Activated naive CD4-positive, alpha-beta T cell treated with anti-CD3 and anti-CD28 coated beads, Interleukin-2, amount 10 ng/mL, durations not matched to agents 7 days and 5 days (primary cell): ENCODE measurements at regions of chr4 and their contacts with region 1.

Region 1: GRCh38 chr4:80060804-80061203 is 12.2 kb downstream of the ANTXR2 start:
- DNase-seq: no peak
- H3K4me3 Mint-ChIP-seq: no peak overlapping the region
- H3K27ac Mint-ChIP-seq: no peak overlapping the region
- H3K4me1 Mint-ChIP-seq: peaks cover 33% of the 10 kb centered on the region
- H3K27me3 Mint-ChIP-seq: no peaks in the 10 kb centered on the region

Region 2: DNA sequence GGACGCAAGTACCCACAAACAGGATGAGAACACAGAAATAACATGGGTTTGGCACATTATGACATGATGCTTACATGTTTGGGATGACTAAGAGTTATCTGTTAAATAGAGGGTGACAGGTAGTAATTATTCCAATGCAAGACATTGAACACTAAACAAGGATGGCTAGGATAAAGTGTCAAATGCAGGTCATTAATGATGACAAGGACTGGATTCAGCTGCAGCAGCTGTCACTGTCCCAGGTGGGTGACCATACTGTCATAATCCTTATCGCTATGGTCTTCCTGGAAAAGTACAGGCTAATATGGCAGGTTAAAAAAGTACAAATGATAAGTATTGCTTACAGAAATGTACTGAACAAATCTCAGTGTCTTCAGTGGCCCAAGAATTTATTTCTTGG is 111.6 kb before region 1 on chr4:
- CTCF ChIA-PET with region 1: no interaction called
- DNase-seq: no peak
- H3K4me3 Mint-ChIP-seq: no peak overlapping the region
- H3K27ac Mint-ChIP-seq: no peak overlapping the region
- H3K4me1 Mint-ChIP-seq: peaks cover 5% of the 10 kb centered on the region
- H3K27me3 Mint-ChIP-seq: no peaks in the 10 kb centered on the region

Region 3: DNA sequence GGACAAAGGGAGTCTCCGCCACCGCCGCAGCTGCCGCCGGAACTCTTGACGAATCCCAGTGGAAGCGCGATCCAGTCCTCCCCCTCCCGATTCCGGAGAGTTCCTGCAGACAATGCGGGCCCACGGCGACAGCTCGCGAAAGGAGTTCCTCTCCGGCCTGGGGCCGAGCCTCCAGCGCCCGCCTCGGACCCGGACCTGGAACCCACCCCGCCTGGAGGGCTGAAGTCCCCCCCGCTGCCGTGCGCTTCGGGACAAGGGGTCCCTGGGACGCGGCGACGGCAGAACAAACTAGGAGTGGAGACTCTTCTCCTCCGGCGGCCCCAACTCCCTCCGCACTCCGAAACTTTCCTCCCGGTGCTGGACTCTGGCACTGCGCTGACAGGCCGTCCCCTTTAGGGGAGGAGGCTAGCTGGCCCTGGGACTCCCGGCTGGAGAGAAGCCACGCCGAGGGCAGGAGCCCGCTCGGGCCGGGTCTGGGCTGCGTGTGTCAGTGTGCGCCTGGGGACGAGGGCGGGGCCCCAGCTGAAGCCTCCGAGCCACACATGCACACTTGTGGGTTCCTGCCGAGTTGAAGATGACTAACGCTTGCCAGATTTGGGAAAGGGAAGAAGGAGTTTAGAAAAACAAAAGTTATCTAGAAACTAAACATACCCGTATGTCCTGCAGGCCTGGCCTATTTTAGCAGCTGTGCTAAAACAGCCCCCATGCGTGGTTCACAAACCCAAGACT is 12.1 kb after region 1 on chr4 and contains the start of gene ANTXR2:
- CTCF ChIA-PET with region 1: interaction called, 13 read pairs
- DNase-seq: peak; percentile 80
- H3K4me3 Mint-ChIP-seq: peak within 1 kb of the TSS; percentile 99
- H3K27ac Mint-ChIP-seq: peak within 1 kb of the TSS; percentile 95
- H3K4me1 Mint-ChIP-seq: peaks cover 82% of the 10 kb centered on the region
- H3K27me3 Mint-ChIP-seq: no peaks in the 10 kb centered on the region